ENCODE measurements at regions of chr6 and their contacts with region 1.

Region 1: GRCh38 chr6:30828027-30828960 is 56.0 kb upstream of the DDR1 start:
- DNase-seq: peak; percentile 87
- ATAC-seq: peak; percentile 81
- H3K4me3 Mint-ChIP-seq: no peak overlapping the region
- H3K27ac Mint-ChIP-seq: peak overlapping the region; percentile 66; the same call in 1 of the 2 replicates
- H3K4me1 Mint-ChIP-seq: peaks cover 40% of the 10 kb centered on the region
- H3K27me3 Mint-ChIP-seq: no peaks in the 10 kb centered on the region
- CTCF ChIP-seq: peak; percentile 79

Region 2: DNA sequence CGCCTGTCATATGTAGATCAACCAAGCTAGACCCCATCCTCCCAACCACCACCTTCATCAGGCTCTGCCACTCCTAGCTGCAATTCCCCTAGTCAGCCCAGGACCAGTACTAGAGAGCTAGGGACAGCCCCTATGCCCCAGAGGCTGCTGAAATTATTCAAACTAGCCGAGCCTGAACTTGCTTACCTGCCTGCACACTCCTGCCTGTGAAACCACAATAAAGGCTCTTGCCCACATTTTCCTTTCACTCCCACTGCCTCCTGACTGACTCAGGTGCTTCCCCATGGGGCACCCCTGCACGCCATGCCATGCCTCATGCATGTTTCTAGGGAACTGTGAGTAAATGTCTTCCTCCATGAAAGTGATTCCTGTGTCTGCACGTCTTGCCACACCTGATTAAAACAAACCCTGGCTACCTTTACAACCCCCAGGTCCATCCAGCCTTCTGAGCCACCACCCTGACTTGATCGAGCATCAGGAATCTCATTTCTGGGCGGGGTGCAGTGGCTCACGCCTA is 17.4 kb before region 1 on chr6:
- CTCF ChIA-PET with region 1: interaction called, 13 read pairs
- POLR2A ChIA-PET with region 1: interaction called, 3 read pairs
- DNase-seq: no peak
- ATAC-seq: peak; percentile 90
- H3K4me3 Mint-ChIP-seq: no peak overlapping the region
- H3K27ac Mint-ChIP-seq: peak overlapping the region; percentile 90
- H3K4me1 Mint-ChIP-seq: peaks cover 29% of the 10 kb centered on the region
- H3K27me3 Mint-ChIP-seq: no peaks in the 10 kb centered on the region
- CTCF ChIP-seq: no peak

Region 3: GRCh38 chr6:30844091-30844535 is 15.8 kb after region 1 on chr6:
- CTCF ChIA-PET with region 1: interaction called, 68 read pairs
- POLR2A ChIA-PET with region 1: interaction called, 3 read pairs
- DNase-seq: peak; percentile 38
- ATAC-seq: peak; percentile 66
- H3K4me3 Mint-ChIP-seq: no peak overlapping the region
- H3K27ac Mint-ChIP-seq: peak overlapping the region; percentile 91
- H3K4me1 Mint-ChIP-seq: peaks cover 84% of the 10 kb centered on the region
- H3K27me3 Mint-ChIP-seq: no peaks in the 10 kb centered on the region
- CTCF ChIP-seq: no peak

Region 4: GRCh38 chr6:30877419-30878371 is 49.4 kb after region 1 on chr6:
- CTCF ChIA-PET with region 1: interaction called, 164 read pairs
- POLR2A ChIA-PET with region 1: interaction called, 6 read pairs
- DNase-seq: peak; percentile 89
- ATAC-seq: peak; percentile 54
- H3K4me3 Mint-ChIP-seq: no peak overlapping the region
- H3K27ac Mint-ChIP-seq: peak overlapping the region; percentile 89
- H3K4me1 Mint-ChIP-seq: peaks cover 62% of the 10 kb centered on the region
- H3K27me3 Mint-ChIP-seq: no peaks in the 10 kb centered on the region
- CTCF ChIP-seq: peak; percentile 75

Region 5: GRCh38 chr6:30883685-30884520 is 55.6 kb after region 1 on chr6 and contains the start of gene DDR1:
- CTCF ChIA-PET with region 1: interaction called, 164 read pairs
- POLR2A ChIA-PET with region 1: interaction called, 6 read pairs
- DNase-seq: peak; percentile 58
- ATAC-seq: peak; percentile 4
- H3K4me3 Mint-ChIP-seq: peak within 1 kb of the TSS; percentile 93
- H3K27ac Mint-ChIP-seq: peak within 1 kb of the TSS; percentile 99
- H3K4me1 Mint-ChIP-seq: peaks cover 71% of the 10 kb centered on the region
- H3K27me3 Mint-ChIP-seq: no peaks in the 10 kb centered on the region
- CTCF ChIP-seq: no peak
- total RNA-seq, gene DDR1: 195 to 230 TPM (median 203 TPM) in 3 replicates